ENCODE measurements at regions of chr1 and their contacts with region 1.

Region 1: GRCh38 chr1:151047925-151048645 is 534 bp downstream of the C1orf56 start:
- DNase-seq: peak; percentile 53
- H3K4me3 ChIP-seq: peak overlapping the region; percentile 44 to 59 (median 55)
- H3K27ac ChIP-seq: peak overlapping the region; percentile 18
- H3K4me1 ChIP-seq: peaks cover 18% of the 10 kb centered on the region
- H3K27me3 ChIP-seq: no peaks in the 10 kb centered on the region
- CTCF ChIP-seq: peak; percentile 32 to 56

Region 2: GRCh38 chr1:151008190-151008860 is 39.8 kb before region 1 on chr1 and contains the start of gene PRUNE1:
- CTCF ChIA-PET with region 1: interaction called, 5 read pairs
- dilution Hi-C with region 1: no loop called
- in situ Hi-C with region 1: no loop called
- intact Hi-C with region 1: loop called (anchors 2 kb)
- DNase-seq: peak; percentile 93
- H3K4me3 ChIP-seq: peak within 1 kb of the TSS; percentile 78 to 93 (median 80)
- H3K27ac ChIP-seq: peak within 1 kb of the TSS; percentile 97
- H3K4me1 ChIP-seq: peaks cover 47% of the 10 kb centered on the region
- H3K27me3 ChIP-seq: no peaks in the 10 kb centered on the region
- CTCF ChIP-seq: no peak
- total RNA-seq, gene PRUNE1: 9.4 to 16.3 TPM

Region 3: DNA sequence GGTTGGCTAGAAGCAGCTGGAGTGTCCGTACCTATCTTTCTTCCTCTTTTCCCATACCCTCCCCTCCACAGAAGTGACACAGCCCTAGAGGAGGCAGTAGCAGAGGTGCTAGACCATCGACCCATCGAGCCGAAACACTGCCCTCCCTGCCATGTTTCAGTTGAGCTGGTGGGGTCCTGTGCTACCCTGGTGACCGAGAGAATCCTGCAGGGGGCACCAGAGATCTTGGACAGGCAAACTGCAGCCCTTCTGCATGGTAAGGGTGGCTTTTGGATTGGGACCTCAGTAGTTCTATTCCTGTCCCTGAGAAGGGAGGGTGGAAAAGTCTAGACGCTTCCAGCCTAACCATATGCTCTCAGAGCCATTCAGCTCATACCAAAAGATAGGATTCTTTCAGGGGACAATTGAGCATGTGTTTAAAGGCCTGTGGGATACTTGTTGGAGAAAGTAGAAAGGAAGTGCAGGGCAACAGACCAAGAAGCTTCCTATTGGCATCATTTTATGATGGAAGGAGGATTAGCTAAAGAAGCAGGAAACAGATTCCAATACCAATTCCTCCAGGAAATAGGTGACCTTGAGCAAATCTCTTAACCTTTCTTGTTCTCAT is 23.4 kb before region 1 on chr1:
- CTCF ChIA-PET with region 1: no interaction called
- dilution Hi-C with region 1: no loop called
- in situ Hi-C with region 1: no loop called
- intact Hi-C with region 1: loop called (anchors 2 kb)
- DNase-seq: peak; percentile 46
- H3K4me3 ChIP-seq: no peak overlapping the region
- H3K27ac ChIP-seq: no peak overlapping the region
- H3K4me1 ChIP-seq: no peaks in the 10 kb centered on the region
- H3K27me3 ChIP-seq: no peaks in the 10 kb centered on the region
- CTCF ChIP-seq: peak; percentile 77 to 86

Region 4: DNA sequence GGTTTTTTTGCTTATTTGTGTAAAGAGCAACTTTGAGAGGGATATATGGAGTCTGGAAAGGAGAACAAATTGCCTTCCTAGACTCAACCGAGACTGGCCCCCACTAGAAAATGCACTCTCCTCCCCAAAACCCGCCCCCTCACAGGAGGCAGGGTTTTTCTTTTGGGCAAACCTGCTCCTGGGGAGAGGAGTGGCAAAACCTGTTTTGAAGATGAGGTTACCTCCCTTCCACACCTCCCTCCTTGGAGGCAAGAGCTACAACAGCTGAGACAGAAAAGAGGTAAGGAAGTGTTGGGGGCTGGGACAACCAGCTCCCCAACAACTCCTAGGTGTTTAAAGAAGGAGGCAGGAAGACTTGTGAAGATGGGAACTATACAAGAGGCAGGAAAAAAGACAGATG is 11.7 kb before region 1 on chr1 and contains the start of gene BNIPL:
- CTCF ChIA-PET with region 1: no interaction called
- dilution Hi-C with region 1: no loop called
- in situ Hi-C with region 1: no loop called
- intact Hi-C with region 1: loop called (anchors 1 kb)
- DNase-seq: peak; percentile 21
- H3K4me3 ChIP-seq: no peak within 1 kb of the TSS
- H3K27ac ChIP-seq: no peak within 1 kb of the TSS
- H3K4me1 ChIP-seq: peaks cover 4% of the 10 kb centered on the region
- H3K27me3 ChIP-seq: no peaks in the 10 kb centered on the region
- CTCF ChIP-seq: no peak
- total RNA-seq, gene BNIPL: 0.17 to 0.47 TPM

Region 5: GRCh38 chr1:151070474-151071276 is 22.6 kb after region 1 on chr1 and contains the start of gene GABPB2:
- CTCF ChIA-PET with region 1: interaction called, 3 read pairs
- dilution Hi-C with region 1: no loop called
- in situ Hi-C with region 1: no loop called
- intact Hi-C with region 1: loop called (anchors 2 kb)
- DNase-seq: peak; percentile 93
- H3K4me3 ChIP-seq: peak within 1 kb of the TSS; percentile 76 to 95 (median 84)
- H3K27ac ChIP-seq: peak within 1 kb of the TSS; percentile 91
- H3K4me1 ChIP-seq: peaks cover 12% of the 10 kb centered on the region
- H3K27me3 ChIP-seq: no peaks in the 10 kb centered on the region
- CTCF ChIP-seq: peak; percentile 62 to 94
- total RNA-seq, gene GABPB2: 9.2 to 10.7 TPM

Region 6: GRCh38 chr1:151327223-151327902 is 279.3 kb after region 1 on chr1 and contains the start of gene PI4KB:
- CTCF ChIA-PET with region 1: interaction called, 15 read pairs
- dilution Hi-C with region 1: no loop called
- in situ Hi-C with region 1: no loop called
- intact Hi-C with region 1: no loop called
- DNase-seq: peak; percentile 97
- H3K4me3 ChIP-seq: peak within 1 kb of the TSS; percentile 75 to 83 (median 79)
- H3K27ac ChIP-seq: peak within 1 kb of the TSS; percentile 93
- H3K4me1 ChIP-seq: peaks cover 15% of the 10 kb centered on the region
- H3K27me3 ChIP-seq: no peaks in the 10 kb centered on the region
- CTCF ChIP-seq: no peak
- total RNA-seq, gene PI4KB: 46.7 to 58.3 TPM